Left cardiac atrium (tissue), 4 donors: ENCODE measurements at regions of chr1 and their contacts with region 1.

Region 1: GRCh38 chr1:167936068-167936929 is at the start of gene DCAF6:
- DNase-seq: peak; percentile 97
- ATAC-seq: peak; percentile 92 to 95
- total RNA-seq, gene DCAF6: 129 TPM

Region 2: GRCh38 chr1:167617153-167618147 is 318.8 kb before region 1 on chr1:
- intact Hi-C with region 1: no loop called
- DNase-seq: peak; percentile 37
- ATAC-seq: peak; percentile 71 to 87

Region 3: GRCh38 chr1:167715157-167715999 is 220.9 kb before region 1 on chr1:
- intact Hi-C with region 1: loop called in 1 of 2 experiments (anchors 10 kb)
- DNase-seq: peak; percentile 80
- ATAC-seq: peak; percentile 55 to 66